ENCODE measurements at regions of chr18 and their contacts with region 1.

Region 1: GRCh38 chr18:36411745-36412168 is 114.2 kb downstream of the FHOD3 start:
- DNase-seq: no peak
- ATAC-seq: peak; percentile 79
- H3K4me3 ChIP-seq: no peak overlapping the region
- H3K27ac ChIP-seq: no peak overlapping the region
- H3K4me1 ChIP-seq: no peaks in the 10 kb centered on the region
- H3K27me3 ChIP-seq: no peaks in the 10 kb centered on the region
- CTCF ChIP-seq: peak; percentile 25 to 33 (median 31); a peak in 3 of 6 replicates
- EP300 ChIP-seq: no peak
- POLR2A ChIP-seq: no peak
- RAD21 ChIP-seq: peak; percentile 28; the same call in 1 of the 2 replicates

Region 2: GRCh38 chr18:36025025-36025424 is 386.7 kb before region 1 on chr18:
- CTCF ChIA-PET with region 1: no interaction called
- POLR2A ChIA-PET with region 1: no interaction called
- RAD21 ChIA-PET with region 1: no interaction called
- SMC1A ChIA-PET with region 1: no interaction called
- in situ Hi-C with region 1: no loop called
- intact Hi-C with region 1: no loop called
- DNase-seq: no peak
- ATAC-seq: no peak
- H3K4me3 ChIP-seq: no peak overlapping the region
- H3K27ac ChIP-seq: no peak overlapping the region
- H3K4me1 ChIP-seq: no peaks in the 10 kb centered on the region
- H3K27me3 ChIP-seq: no peaks in the 10 kb centered on the region
- CTCF ChIP-seq: no peak
- EP300 ChIP-seq: no peak
- POLR2A ChIP-seq: no peak
- RAD21 ChIP-seq: no peak

Region 3: DNA sequence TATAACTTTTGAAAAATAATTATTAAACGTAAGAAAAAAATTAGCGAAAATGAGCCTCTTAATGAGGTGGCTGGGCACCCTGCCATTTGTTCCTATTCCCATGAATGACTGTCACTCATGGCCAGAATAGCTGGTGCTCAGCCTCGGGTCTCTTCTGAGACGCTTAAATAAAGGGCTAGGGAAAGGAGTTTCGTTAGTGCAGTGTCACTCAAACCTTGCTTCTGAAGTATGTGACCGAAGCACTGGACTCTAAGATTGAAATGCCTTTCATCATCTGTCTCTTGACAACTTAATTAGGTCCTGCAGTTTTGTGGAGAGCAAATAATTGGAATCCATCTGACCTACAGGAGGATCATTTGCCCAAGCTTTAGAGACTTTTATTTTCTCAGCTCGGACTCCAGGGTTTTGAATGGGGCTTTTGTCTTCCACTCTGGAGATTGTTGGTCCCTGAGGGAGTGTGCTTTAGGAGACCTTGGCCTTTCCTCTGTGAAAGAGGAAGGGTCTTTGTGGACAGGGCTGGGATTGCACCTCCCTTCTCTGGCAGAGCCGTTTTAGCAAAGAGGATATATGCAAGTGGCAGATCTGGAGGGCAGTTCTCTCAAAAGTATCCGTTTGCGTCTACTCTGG is 156.6 kb before region 1 on chr18:
- CTCF ChIA-PET with region 1: no interaction called
- POLR2A ChIA-PET with region 1: no interaction called
- RAD21 ChIA-PET with region 1: no interaction called
- SMC1A ChIA-PET with region 1: no interaction called
- in situ Hi-C with region 1: no loop called
- intact Hi-C with region 1: no loop called
- DNase-seq: no peak
- ATAC-seq: no peak
- H3K4me3 ChIP-seq: no peak overlapping the region
- H3K27ac ChIP-seq: no peak overlapping the region
- H3K4me1 ChIP-seq: no peaks in the 10 kb centered on the region
- H3K27me3 ChIP-seq: no peaks in the 10 kb centered on the region
- CTCF ChIP-seq: no peak
- EP300 ChIP-seq: no peak
- POLR2A ChIP-seq: no peak
- RAD21 ChIP-seq: no peak

Region 4: DNA sequence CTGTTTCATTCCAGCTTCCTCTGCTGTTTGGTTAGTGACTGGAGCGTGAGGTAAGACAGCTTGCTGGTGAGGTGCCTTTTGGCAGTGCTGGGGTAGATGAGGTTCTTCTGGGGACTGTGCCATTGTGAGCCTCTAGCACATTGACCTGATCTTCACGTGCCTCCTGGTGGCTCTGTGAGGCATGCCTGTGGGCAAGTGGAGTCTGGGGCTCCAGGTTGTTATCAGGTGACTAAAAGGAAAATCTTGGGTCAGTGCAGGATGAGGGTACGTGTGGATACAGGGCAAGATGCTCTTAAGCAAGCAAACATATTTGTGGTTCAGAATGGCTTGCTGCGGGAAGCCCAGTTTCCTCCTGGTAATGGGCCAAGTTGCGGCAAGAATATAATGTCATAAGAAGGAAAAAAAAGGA is 38.9 kb before region 1 on chr18:
- CTCF ChIA-PET with region 1: interaction called, 17 read pairs
- POLR2A ChIA-PET with region 1: interaction called, 3 read pairs
- RAD21 ChIA-PET with region 1: interaction called, 20 read pairs
- SMC1A ChIA-PET with region 1: interaction called, 1,180 read pairs
- in situ Hi-C with region 1: no loop called
- intact Hi-C with region 1: loop called (anchors 2 kb)
- DNase-seq: no peak
- ATAC-seq: peak; percentile 57
- H3K4me3 ChIP-seq: no peak overlapping the region
- H3K27ac ChIP-seq: no peak overlapping the region
- H3K4me1 ChIP-seq: no peaks in the 10 kb centered on the region; the same call in 1 of the 2 replicates
- H3K27me3 ChIP-seq: no peaks in the 10 kb centered on the region
- CTCF ChIP-seq: peak; percentile 16 to 33 (median 32); a peak in 3 of 6 replicates
- EP300 ChIP-seq: no peak
- POLR2A ChIP-seq: no peak
- RAD21 ChIP-seq: peak; percentile 53; the same call in 1 of the 2 replicates

Region 5: GRCh38 chr18:36378205-36378604 is 33.6 kb before region 1 on chr18:
- CTCF ChIA-PET with region 1: interaction called, 17 read pairs
- POLR2A ChIA-PET with region 1: no interaction called
- RAD21 ChIA-PET with region 1: interaction called, 9 read pairs
- SMC1A ChIA-PET with region 1: interaction called, 1,180 read pairs
- in situ Hi-C with region 1: no loop called
- intact Hi-C with region 1: loop called (anchors 2 kb)
- DNase-seq: no peak
- ATAC-seq: no peak
- H3K4me3 ChIP-seq: no peak overlapping the region
- H3K27ac ChIP-seq: no peak overlapping the region
- H3K4me1 ChIP-seq: no peaks in the 10 kb centered on the region; the same call in 1 of the 2 replicates
- H3K27me3 ChIP-seq: no peaks in the 10 kb centered on the region
- CTCF ChIP-seq: no peak
- EP300 ChIP-seq: no peak
- POLR2A ChIP-seq: no peak
- RAD21 ChIP-seq: no peak

Region 6: DNA sequence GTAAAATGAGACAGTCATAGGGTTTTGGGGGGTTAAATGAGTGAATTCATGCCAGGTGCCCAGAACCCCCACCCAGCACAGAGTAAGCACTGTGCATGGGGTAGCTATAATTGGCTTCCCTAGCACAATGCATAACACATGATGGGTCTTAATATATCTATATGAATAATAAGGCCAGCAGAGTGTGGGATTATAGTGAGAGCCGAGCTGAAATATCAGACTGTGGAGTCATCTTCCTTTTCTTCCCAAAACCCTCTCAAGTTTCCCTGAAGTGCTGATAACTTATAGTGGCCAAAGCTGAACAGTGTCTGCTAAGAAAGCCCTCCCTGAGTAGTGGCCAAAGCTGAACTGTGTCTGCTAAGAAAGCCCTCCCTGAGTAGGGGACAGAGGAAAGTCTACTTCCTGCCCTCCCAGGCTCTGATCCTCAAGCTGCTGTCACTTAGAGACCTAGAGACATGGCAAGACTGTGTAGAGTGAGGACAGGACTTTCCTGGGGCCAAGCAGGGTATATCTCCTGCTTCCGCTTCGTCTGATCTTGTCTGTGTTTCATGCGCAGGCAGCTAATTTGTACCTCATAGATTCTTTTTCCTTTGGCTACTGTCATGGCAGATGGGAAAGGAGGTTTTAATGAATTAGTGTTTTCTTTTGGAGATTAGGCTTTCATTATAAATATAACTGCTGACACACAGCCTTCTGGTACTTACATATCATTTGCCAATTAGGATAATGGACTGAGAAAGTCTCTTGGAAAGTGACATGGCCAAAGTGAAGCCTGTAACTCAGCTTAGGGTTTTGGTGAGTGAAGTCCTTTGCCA is 19.4 kb before region 1 on chr18:
- CTCF ChIA-PET with region 1: interaction called, 14 read pairs
- POLR2A ChIA-PET with region 1: interaction called, 5 read pairs
- RAD21 ChIA-PET with region 1: interaction called, 3 read pairs
- SMC1A ChIA-PET with region 1: interaction called, 1,180 read pairs
- in situ Hi-C with region 1: no loop called
- intact Hi-C with region 1: no loop called
- DNase-seq: no peak
- ATAC-seq: peak; percentile 10; the same call in 1 of the 3 replicates
- H3K4me3 ChIP-seq: no peak overlapping the region
- H3K27ac ChIP-seq: no peak overlapping the region
- H3K4me1 ChIP-seq: no peaks in the 10 kb centered on the region
- H3K27me3 ChIP-seq: no peaks in the 10 kb centered on the region
- CTCF ChIP-seq: no peak
- EP300 ChIP-seq: no peak
- POLR2A ChIP-seq: no peak
- RAD21 ChIP-seq: no peak

Region 7: DNA sequence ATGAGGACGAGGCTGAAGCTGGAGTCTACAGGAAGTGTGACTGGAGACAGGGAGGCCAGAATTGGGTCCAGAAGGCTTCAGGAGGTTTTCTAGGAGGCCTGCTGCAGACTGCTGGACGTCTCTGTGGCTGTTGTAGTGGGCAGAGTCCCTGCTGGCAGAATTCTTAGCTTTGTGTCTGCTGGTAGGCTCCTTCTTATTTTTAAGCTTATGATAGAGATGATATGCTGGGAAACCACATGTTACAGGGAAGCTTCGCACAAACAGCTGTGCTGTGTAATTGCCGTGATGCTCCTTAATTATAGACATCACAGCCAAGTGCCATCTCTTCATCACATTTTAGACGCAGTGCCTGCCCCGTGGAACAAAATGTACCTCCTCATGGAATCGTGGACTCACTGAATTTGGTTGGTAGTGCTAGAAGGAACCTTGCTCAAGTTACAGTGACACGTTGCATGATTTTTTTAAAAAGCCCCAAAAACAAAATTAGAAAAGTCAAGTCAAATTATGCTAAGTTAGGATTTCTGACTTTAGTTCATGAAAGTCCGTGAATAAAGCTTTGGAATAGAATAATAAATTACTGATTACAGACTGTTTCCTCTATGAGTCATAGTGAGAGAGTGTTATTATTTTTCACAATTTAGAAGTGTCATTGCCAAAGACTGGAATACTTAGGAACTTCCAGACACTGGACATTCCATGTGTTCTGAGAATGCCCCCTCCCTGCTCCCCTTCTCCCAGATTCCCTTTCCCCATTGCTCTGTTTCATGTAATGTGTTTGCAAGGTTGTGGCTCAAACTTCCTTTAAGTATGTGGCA is 29.9 kb after region 1 on chr18:
- CTCF ChIA-PET with region 1: interaction called, 83 read pairs
- POLR2A ChIA-PET with region 1: interaction called, 5 read pairs
- RAD21 ChIA-PET with region 1: interaction called, 6 read pairs
- SMC1A ChIA-PET with region 1: interaction called, 253 read pairs
- in situ Hi-C with region 1: no loop called
- intact Hi-C with region 1: no loop called
- DNase-seq: no peak
- ATAC-seq: peak; percentile 10; the same call in 2 of the 3 replicates
- H3K4me3 ChIP-seq: no peak overlapping the region
- H3K27ac ChIP-seq: no peak overlapping the region
- H3K4me1 ChIP-seq: no peaks in the 10 kb centered on the region
- H3K27me3 ChIP-seq: no peaks in the 10 kb centered on the region
- CTCF ChIP-seq: no peak
- EP300 ChIP-seq: peak in 1 of 2 experiments; percentile 16; a peak in 1 of 4 replicates
- POLR2A ChIP-seq: no peak
- RAD21 ChIP-seq: no peak

Region 8: GRCh38 chr18:36744261-36744876 is 332.6 kb after region 1 on chr18:
- CTCF ChIA-PET with region 1: no interaction called
- POLR2A ChIA-PET with region 1: no interaction called
- RAD21 ChIA-PET with region 1: no interaction called
- SMC1A ChIA-PET with region 1: no interaction called
- in situ Hi-C with region 1: no loop called
- intact Hi-C with region 1: no loop called
- DNase-seq: no peak
- ATAC-seq: no peak
- H3K4me3 ChIP-seq: no peak overlapping the region
- H3K27ac ChIP-seq: no peak overlapping the region
- H3K4me1 ChIP-seq: peaks cover 2% of the 10 kb centered on the region
- H3K27me3 ChIP-seq: no peaks in the 10 kb centered on the region
- CTCF ChIP-seq: no peak
- EP300 ChIP-seq: no peak
- POLR2A ChIP-seq: no peak
- RAD21 ChIP-seq: no peak

Measured in GM12878 (cell line).